Prostate gland (tissue), 2 donors: ENCODE measurements at regions of chr9 and their contacts with region 1.

Region 1: GRCh38 chr9:112361601-112362000 is 18.3 kb upstream of the HSDL2 start:
- DNase-seq: peak; percentile 20
- H3K4me3 ChIP-seq: no peak overlapping the region
- H3K27ac ChIP-seq: no peak overlapping the region
- H3K4me1 ChIP-seq: no peaks in the 10 kb centered on the region
- H3K27me3 ChIP-seq: no peaks in the 10 kb centered on the region
- CTCF ChIP-seq: peak in 3 of 4 experiments; percentile 67 to 85 (median 74)
- POLR2A ChIP-seq: no peak

Region 2: GRCh38 chr9:111759762-111760639 is 601.6 kb before region 1 on chr9:
- intact Hi-C with region 1: loop called (anchors 5 kb)
- DNase-seq: peak; percentile 61
- H3K4me3 ChIP-seq: no peak overlapping the region
- H3K27ac ChIP-seq: no peak overlapping the region
- H3K4me1 ChIP-seq: no peaks in the 10 kb centered on the region
- H3K27me3 ChIP-seq: no peaks in the 10 kb centered on the region
- CTCF ChIP-seq: peak in 3 of 4 experiments; percentile 70 to 87 (median 82)
- POLR2A ChIP-seq: no peak

Region 3: GRCh38 chr9:112097712-112098688 is 263.6 kb before region 1 on chr9:
- intact Hi-C with region 1: loop called (anchors 2 kb)
- DNase-seq: peak; percentile 31
- H3K4me3 ChIP-seq: no peak overlapping the region
- H3K27ac ChIP-seq: no peak overlapping the region
- H3K4me1 ChIP-seq: no peaks in the 10 kb centered on the region
- H3K27me3 ChIP-seq: no peaks in the 10 kb centered on the region
- CTCF ChIP-seq: peak; percentile 44 to 85 (median 80)
- POLR2A ChIP-seq: no peak